ENCODE measurements at regions of chr1 and their contacts with region 1.

Region 1: DNA sequence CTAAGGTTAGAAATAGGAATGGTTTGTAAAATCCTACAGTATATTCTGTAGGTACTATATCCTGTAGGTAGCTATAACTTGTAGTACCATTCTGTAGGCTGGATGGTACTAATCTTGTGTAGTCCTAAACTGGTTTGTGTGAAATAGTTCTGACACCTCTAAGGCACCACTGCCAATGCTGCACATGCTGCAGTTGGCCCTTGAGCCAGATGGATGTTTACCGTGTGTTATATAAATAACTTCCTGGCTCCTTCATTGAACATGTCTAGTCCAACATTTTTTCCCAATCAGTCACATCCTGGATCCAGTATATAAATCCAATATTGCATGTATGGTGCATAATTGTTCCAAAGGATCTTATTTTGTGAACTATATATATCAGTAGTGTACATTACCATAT is 89.5 kb upstream of the GNG4 start:
- DNase-seq: no peak
- H3K4me3 Mint-ChIP-seq: no peak overlapping the region
- H3K27ac Mint-ChIP-seq: no peak overlapping the region
- H3K4me1 Mint-ChIP-seq: peaks cover 4% of the 10 kb centered on the region
- H3K27me3 Mint-ChIP-seq: no peaks in the 10 kb centered on the region

Region 2: GRCh38 chr1:234326497-234327366 is 1412.4 kb before region 1 on chr1:
- intact Hi-C with region 1: no loop called
- DNase-seq: peak; percentile 91
- H3K4me3 Mint-ChIP-seq: peak overlapping the region; percentile 84
- H3K27ac Mint-ChIP-seq: peak overlapping the region; percentile 74
- H3K4me1 Mint-ChIP-seq: peaks cover 22% of the 10 kb centered on the region
- H3K27me3 Mint-ChIP-seq: peaks cover 22% of the 10 kb centered on the region

Region 3: GRCh38 chr1:235697508-235697907 is 41.6 kb before region 1 on chr1:
- intact Hi-C with region 1: loop called (anchors 5 kb)
- DNase-seq: no peak
- H3K4me3 Mint-ChIP-seq: peak overlapping the region; percentile 15
- H3K27ac Mint-ChIP-seq: peak overlapping the region; percentile 82
- H3K4me1 Mint-ChIP-seq: peaks cover 13% of the 10 kb centered on the region
- H3K27me3 Mint-ChIP-seq: no peaks in the 10 kb centered on the region